ENCODE measurements at regions of chr16 and their contacts with region 1.

Region 1: GRCh38 chr16:66872943-66873684 is 7.2 kb upstream of the PDP2 start:
- DNase-seq: peak; percentile 94
- H3K4me3 ChIP-seq: peak overlapping the region; percentile 57
- H3K27ac ChIP-seq: peak overlapping the region; percentile 82
- H3K27me3 ChIP-seq: no peaks in the 10 kb centered on the region
- CTCF ChIP-seq: peak; percentile 94

Region 2: GRCh38 chr16:66650707-66651473 is 222.2 kb before region 1 on chr16:
- CTCF ChIA-PET with region 1: interaction called, 16 read pairs
- POLR2A ChIA-PET with region 1: no interaction called
- DNase-seq: peak; percentile 55
- H3K4me3 ChIP-seq: peak overlapping the region; percentile 5; the same call in 1 of the 2 replicates
- H3K27ac ChIP-seq: no peak overlapping the region
- H3K27me3 ChIP-seq: no peaks in the 10 kb centered on the region
- CTCF ChIP-seq: peak; percentile 96

Region 3: GRCh38 chr16:66824006-66824405 is 49.1 kb before region 1 on chr16:
- CTCF ChIA-PET with region 1: interaction called, 161 read pairs
- POLR2A ChIA-PET with region 1: interaction called, 5 read pairs
- DNase-seq: no peak
- H3K4me3 ChIP-seq: no peak overlapping the region
- H3K27ac ChIP-seq: no peak overlapping the region
- H3K27me3 ChIP-seq: no peaks in the 10 kb centered on the region
- CTCF ChIP-seq: no peak

Region 4: GRCh38 chr16:66850115-66850815 is 22.8 kb before region 1 on chr16:
- CTCF ChIA-PET with region 1: interaction called, 54 read pairs
- POLR2A ChIA-PET with region 1: no interaction called
- DNase-seq: no peak
- H3K4me3 ChIP-seq: no peak overlapping the region
- H3K27ac ChIP-seq: no peak overlapping the region
- H3K27me3 ChIP-seq: peaks cover 47% of the 10 kb centered on the region
- CTCF ChIP-seq: no peak

Region 5: DNA sequence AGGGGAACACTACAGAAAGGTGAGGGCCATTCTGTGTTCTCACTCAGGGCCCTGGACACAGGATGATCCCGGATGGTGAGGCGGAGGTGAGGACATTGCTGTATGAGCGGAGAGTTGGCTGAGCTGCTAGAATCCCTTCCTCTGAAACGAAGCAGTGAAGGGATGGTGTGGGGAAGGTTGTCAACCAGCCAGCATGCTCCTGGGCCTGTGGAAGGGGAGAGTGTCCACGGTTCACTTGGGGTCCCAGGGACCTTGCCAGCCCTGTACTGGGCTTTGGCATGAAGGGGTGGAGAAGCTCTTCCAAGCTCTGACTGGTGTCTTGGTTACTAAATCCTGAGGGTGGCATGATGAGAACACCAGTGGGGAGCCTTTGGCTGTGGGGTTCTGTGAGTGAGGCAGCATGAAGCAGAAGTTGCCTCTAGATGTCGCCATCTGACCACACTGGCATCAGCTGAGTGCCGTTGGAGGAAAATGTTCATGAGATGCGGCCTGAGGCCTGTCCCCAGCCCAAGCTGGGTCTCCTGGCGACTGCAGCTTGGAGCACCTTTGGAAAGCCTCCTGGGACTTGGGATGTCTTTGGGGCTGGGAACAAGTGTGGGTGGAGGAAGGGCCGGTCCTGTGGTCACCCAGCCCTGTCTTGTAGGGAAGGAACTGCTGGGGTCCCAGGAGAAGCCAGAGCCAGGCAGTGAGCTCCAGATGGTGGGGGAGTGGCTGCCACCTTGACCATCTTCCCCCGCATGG is 22.0 kb after region 1 on chr16:
- CTCF ChIA-PET with region 1: interaction called, 12 read pairs
- POLR2A ChIA-PET with region 1: no interaction called
- DNase-seq: no peak
- H3K4me3 ChIP-seq: no peak overlapping the region
- H3K27ac ChIP-seq: peak overlapping the region; percentile 11
- H3K27me3 ChIP-seq: no peaks in the 10 kb centered on the region
- CTCF ChIP-seq: peak; percentile 93

Region 6: GRCh38 chr16:67372664-67373063 is 499.6 kb after region 1 on chr16:
- CTCF ChIA-PET with region 1: no interaction called
- POLR2A ChIA-PET with region 1: no interaction called
- DNase-seq: no peak
- H3K4me3 ChIP-seq: no peak overlapping the region
- H3K27ac ChIP-seq: no peak overlapping the region
- H3K27me3 ChIP-seq: peaks cover 31% of the 10 kb centered on the region
- CTCF ChIP-seq: peak; percentile 58

Measured in AG04450 (cell line).